CD14-positive monocyte (primary cell): ENCODE measurements at regions of chr2 and their contacts with region 1.

Region 1: GRCh38 chr2:73071360-73072133 is at the start of gene SFXN5:
- DNase-seq: peak; percentile 95 to 97 (median 96)
- H3K4me3 ChIP-seq: peak within 1 kb of the TSS; percentile 75 to 92 (median 84)
- H3K4me3 Mint-ChIP-seq: peak within 1 kb of the TSS; percentile 90 to 99
- H3K27ac ChIP-seq: peak within 1 kb of the TSS; percentile 82 to 93
- H3K27ac Mint-ChIP-seq: peak within 1 kb of the TSS; percentile 92 to 96 (median 94)
- H3K4me1 ChIP-seq: peaks cover 28 to 34% of the 10 kb centered on the region in 2 donors
- H3K4me1 Mint-ChIP-seq: peaks cover 41% of the 10 kb centered on the region
- H3K27me3 ChIP-seq: no peaks in the 10 kb centered on the region
- H3K27me3 Mint-ChIP-seq: peaks cover 0 to 8% (median 2%) of the 10 kb centered on the region in 3 donors
- CTCF ChIP-seq: peak; percentile 18
- polyA plus RNA-seq, gene SFXN5: 5.9 to 28.6 (median 9.5) TPM

Region 2: GRCh38 chr2:72973566-72974435 is 97.7 kb before region 1 on chr2:
- intact Hi-C with region 1: no loop called
- DNase-seq: peak; percentile 23 to 48 (median 46)
- H3K4me3 ChIP-seq: no peak overlapping the region
- H3K4me3 Mint-ChIP-seq: no peak overlapping the region
- H3K27ac ChIP-seq: no peak overlapping the region
- H3K27ac Mint-ChIP-seq: peak overlapping the region in 1 of 7 donors; percentile 41
- H3K4me1 ChIP-seq: peaks cover 10 to 13% of the 10 kb centered on the region in 2 donors
- H3K4me1 Mint-ChIP-seq: peaks cover 23% of the 10 kb centered on the region
- H3K27me3 ChIP-seq: no peaks in the 10 kb centered on the region
- H3K27me3 Mint-ChIP-seq: peaks cover 0 to 3% (median 0%) of the 10 kb centered on the region in 3 donors
- CTCF ChIP-seq: peak; percentile 89

Region 3: DNA sequence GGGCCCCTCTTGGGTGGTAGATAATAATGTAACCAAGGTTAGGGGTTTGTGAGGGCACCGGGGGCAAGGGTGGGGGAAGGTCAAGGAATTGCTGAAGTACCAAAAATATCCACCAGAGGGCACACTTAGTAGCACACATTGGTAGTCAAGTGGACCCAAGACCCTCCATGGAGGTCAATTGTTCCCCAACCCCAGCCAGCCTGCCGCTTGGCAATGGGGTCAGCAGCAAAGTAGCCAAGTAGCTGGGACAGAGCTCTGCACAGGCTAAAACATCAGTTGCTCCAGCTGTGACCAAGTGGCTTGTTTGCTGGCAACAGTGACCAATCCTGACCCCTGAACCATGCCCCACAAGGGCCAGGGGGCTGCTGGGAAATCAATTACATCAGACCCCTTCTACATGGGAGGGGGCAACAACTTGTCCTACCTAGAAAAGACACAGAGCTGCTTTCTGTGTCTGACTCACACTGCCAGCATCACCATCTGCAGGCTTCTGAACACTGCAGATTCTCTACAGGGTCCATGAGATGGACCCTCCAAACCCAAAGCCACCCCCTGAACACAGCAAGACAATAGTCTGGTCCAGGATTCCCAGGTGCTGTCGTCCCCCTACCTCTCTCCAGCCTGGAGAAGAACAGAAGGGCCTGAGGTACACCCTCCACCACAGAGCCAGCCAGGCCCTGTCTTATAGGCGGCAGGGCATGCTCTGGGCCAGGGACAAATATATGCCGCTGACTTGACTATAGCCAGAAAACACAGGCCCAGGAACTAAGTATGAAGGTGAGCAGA is 78.2 kb before region 1 on chr2:
- intact Hi-C with region 1: loop called in 1 of 2 experiments (anchors 2 kb)
- DNase-seq: peak; percentile 26 to 54 (median 47)
- H3K4me3 ChIP-seq: no peak overlapping the region
- H3K4me3 Mint-ChIP-seq: no peak overlapping the region
- H3K27ac ChIP-seq: no peak overlapping the region
- H3K27ac Mint-ChIP-seq: peak overlapping the region in 2 of 7 donors; percentile 32 to 36
- H3K4me1 ChIP-seq: peaks cover 3 to 4% of the 10 kb centered on the region in 2 donors
- H3K4me1 Mint-ChIP-seq: peaks cover 5% of the 10 kb centered on the region
- H3K27me3 ChIP-seq: no peaks in the 10 kb centered on the region
- H3K27me3 Mint-ChIP-seq: no peaks in the 10 kb centered on the region
- CTCF ChIP-seq: peak; percentile 97

Region 4: GRCh38 chr2:73020657-73021370 is 50.7 kb before region 1 on chr2:
- intact Hi-C with region 1: no loop called
- DNase-seq: no peak
- H3K4me3 ChIP-seq: no peak overlapping the region
- H3K4me3 Mint-ChIP-seq: no peak overlapping the region
- H3K27ac ChIP-seq: no peak overlapping the region
- H3K27ac Mint-ChIP-seq: peak overlapping the region in 4 of 7 donors; percentile 12 to 73 (median 42)
- H3K4me1 ChIP-seq: peaks cover 19 to 21% of the 10 kb centered on the region in 2 donors
- H3K4me1 Mint-ChIP-seq: peaks cover 14% of the 10 kb centered on the region
- H3K27me3 ChIP-seq: no peaks in the 10 kb centered on the region
- H3K27me3 Mint-ChIP-seq: peaks cover 0 to 2% (median 2%) of the 10 kb centered on the region in 3 donors
- CTCF ChIP-seq: no peak

Region 5: DNA sequence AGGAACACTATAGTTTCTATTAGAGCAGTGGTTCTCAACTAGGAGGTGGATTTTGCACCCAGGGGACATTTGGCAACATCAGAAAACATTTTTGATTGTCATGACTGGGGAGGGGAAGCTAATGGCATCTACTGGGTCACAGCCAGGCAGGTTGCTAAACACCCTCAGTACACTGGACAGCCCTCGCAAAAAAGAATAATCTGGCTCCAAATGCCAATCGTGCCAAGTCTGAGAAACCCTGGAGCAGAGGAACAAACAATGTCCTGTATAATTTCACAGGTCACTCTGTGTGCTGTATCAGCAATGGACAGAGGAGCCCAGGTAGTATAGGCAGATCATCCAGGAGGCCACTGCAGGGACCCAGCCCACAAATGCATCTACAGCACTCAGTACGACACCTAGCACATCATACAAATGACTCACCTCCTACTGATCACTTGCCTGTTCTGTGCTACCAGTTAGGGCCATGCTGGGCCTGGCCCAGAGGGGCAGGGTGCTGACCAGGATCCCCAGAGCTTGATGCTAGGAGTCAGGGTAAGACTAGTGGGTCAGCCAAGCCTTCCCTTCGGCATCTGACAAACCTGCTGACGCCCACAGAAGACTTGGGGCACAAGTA is 37.7 kb before region 1 on chr2:
- intact Hi-C with region 1: loop called in 1 of 2 experiments (anchors 5 kb)
- DNase-seq: peak; percentile 47 to 65 (median 65)
- H3K4me3 ChIP-seq: peak overlapping the region in 1 of 3 experiments; percentile 59
- H3K4me3 Mint-ChIP-seq: peak overlapping the region; percentile 34 to 48
- H3K27ac ChIP-seq: peak overlapping the region; percentile 89 to 92
- H3K27ac Mint-ChIP-seq: peak overlapping the region; percentile 85 to 98 (median 95)
- H3K4me1 ChIP-seq: peaks cover 63 to 68% of the 10 kb centered on the region in 2 donors
- H3K4me1 Mint-ChIP-seq: peaks cover 74% of the 10 kb centered on the region
- H3K27me3 ChIP-seq: no peaks in the 10 kb centered on the region
- H3K27me3 Mint-ChIP-seq: peaks cover 0 to 5% (median 0%) of the 10 kb centered on the region in 3 donors
- CTCF ChIP-seq: no peak

Region 6: DNA sequence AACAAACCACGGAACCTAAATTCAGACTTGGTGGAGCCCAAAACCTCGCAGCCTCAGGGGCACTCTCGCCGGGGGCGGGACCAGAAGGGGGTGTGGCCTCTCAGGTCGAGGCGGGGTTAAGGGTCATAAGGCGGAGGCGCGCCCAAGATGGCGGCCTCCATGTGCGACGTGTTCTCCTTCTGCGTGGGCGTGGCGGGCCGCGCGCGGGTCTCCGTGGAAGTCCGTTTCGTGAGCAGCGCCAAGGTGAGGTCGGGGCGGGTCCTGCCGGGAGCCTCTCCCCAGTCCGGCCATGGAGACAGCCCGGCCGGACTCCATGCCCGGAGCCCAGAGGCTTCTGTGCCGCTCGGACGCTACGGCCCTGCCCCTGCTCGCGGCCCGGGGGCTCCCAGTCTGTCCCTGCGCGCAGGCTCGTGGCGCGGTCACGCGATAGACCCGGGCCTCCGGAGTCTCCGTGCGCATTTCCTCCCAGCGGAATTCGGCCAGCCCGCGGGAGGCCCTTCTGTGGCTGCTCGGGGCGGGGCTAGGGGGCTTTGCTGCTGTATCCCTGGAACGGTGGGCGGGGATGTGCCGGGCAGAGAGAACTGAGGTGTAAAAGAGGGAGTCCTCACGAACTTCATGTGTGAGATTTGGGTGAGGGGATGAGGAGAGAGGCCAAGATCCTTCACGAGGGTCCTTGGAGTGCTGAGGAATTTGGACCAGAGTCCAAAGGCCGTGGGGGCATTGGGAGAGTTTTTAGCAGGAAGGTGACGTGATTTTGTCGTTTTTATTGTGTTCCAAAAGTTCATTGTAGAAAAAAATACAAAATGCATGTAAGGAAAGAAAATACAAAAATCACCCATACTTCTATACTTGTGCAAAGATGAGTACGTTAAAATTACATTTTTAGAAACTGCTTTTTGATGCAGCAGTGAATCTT is 142.8 kb after region 1 on chr2 and contains the start of gene SMYD5:
- intact Hi-C with region 1: loop called in 1 of 2 experiments (anchors 2 kb)
- DNase-seq: peak; percentile 74 to 78 (median 74)
- H3K4me3 ChIP-seq: peak within 1 kb of the TSS; percentile 60 to 95 (median 93)
- H3K4me3 Mint-ChIP-seq: peak within 1 kb of the TSS; percentile 87 to 92
- H3K27ac ChIP-seq: peak within 1 kb of the TSS in 1 of 2 donors; percentile 39
- H3K27ac Mint-ChIP-seq: peak within 1 kb of the TSS in 6 of 7 donors; percentile 61 to 85 (median 82)
- H3K4me1 ChIP-seq: peaks cover 12 to 24% of the 10 kb centered on the region in 2 donors
- H3K4me1 Mint-ChIP-seq: peaks cover 22% of the 10 kb centered on the region
- H3K27me3 ChIP-seq: no peaks in the 10 kb centered on the region
- H3K27me3 Mint-ChIP-seq: peaks cover under 1 to 4% (median 1%) of the 10 kb centered on the region in 3 donors
- CTCF ChIP-seq: no peak
- polyA plus RNA-seq, gene SMYD5: 1.6 to 5.2 (median 1.7) TPM

Region 7: DNA sequence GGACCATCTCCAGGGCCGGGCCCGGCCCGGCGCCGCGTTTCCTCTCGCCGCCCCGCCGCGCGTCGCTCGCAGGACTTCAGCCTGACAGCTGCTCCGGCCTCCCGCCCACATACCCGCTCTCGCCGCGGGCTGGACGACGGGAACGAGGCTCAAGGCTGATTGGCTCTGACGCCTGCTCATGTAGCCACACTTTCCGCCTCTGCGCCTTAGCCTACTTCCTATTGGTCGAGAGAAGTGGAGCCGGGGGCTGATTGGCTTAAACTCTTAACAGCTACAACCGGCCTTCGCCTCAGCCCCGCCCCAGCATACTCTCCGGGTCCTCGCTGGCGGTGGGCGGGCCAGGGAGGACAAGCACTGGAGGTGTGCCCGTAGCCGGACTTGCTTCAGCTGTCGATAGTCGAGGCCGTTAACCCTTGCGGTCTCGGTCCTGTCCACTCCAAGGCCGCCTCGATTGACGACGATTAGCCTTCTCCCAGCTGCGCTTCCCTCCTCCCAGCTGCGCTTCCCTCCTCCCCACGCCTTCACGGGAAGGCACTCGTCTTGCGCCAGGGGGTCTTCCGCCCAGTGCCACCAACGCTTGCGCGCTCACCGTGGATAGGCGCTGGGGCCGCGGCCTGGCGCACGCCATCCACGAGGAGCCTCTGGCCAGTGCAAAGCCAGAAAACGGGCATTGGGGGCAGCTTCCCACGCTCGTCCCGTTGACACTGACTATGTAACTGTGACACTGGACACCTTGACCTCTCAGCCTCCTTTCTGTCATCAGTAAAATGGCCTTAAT is 161.8 kb after region 1 on chr2 and contains the start of gene PRADC1:
- intact Hi-C with region 1: loop called (anchors 1 to 5 kb)
- DNase-seq: peak; percentile 97 to 99 (median 98)
- H3K4me3 ChIP-seq: peak within 1 kb of the TSS; percentile 66 to 84 (median 76)
- H3K4me3 Mint-ChIP-seq: peak within 1 kb of the TSS; percentile 89 to 95
- H3K27ac ChIP-seq: peak within 1 kb of the TSS; percentile 73 to 87
- H3K27ac Mint-ChIP-seq: peak within 1 kb of the TSS; percentile 83 to 94 (median 94)
- H3K4me1 ChIP-seq: peaks cover 24 to 35% of the 10 kb centered on the region in 2 donors
- H3K4me1 Mint-ChIP-seq: peaks cover 26% of the 10 kb centered on the region
- H3K27me3 ChIP-seq: no peaks in the 10 kb centered on the region
- H3K27me3 Mint-ChIP-seq: peaks cover 0 to 1% (median 0%) of the 10 kb centered on the region in 3 donors
- CTCF ChIP-seq: no peak
- polyA plus RNA-seq, gene PRADC1: 9.0 to 49.2 (median 33.3) TPM